Testis (tissue), 5 donors: ENCODE measurements at regions of chr15 and their contacts with region 1.

Region 1: DNA sequence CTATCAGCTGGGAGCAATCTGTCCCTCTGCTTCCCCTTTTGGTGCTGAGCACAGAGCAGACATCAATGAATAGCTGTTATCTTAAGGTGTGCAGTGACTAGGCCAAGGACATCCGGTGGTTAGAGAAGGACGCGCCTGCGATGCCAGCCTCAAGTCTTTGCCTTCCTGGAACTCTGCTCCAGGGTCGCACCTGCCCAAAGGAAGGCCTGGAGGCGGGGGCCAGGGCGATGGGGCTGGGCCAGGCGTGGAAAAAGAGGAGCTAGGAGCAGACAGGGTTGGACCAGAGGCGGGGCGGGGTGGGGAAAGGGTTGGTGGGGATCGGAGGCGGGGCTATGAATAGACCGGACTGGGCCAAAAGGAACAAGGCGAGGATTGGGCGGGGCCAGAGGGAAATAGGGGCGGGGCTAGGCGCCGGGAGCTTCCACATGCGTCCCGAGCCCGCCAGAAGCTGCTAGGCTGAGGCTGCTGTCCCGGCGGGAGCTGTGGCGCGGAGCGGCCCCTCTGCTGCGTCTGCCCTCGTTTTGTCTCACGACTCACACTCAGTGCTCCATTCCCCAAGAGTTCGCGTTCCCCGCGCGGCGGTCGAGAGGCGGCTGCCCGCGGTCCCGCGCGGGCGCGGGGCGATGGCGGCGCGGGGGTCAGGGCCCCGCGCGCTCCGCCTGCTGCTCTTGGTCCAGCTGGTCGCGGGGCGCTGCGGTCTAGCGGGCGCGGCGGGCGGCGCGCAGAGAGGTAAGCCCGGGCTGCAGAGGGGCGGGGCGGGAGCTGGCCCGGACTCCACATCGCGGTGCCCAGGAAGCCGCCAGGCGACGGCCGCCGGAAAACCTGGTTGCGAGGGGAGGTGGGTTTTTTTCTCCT is at the start of gene CHRNA5:
- DNase-seq: peak; percentile 93
- H3K4me3 ChIP-seq: peak within 1 kb of the TSS; percentile 56 to 62
- H3K27ac ChIP-seq: peak within 1 kb of the TSS in 1 of 2 donors; percentile 31
- H3K4me1 ChIP-seq: peaks cover 9% of the 10 kb centered on the region
- H3K27me3 ChIP-seq: no peaks in the 10 kb centered on the region
- CTCF ChIP-seq: no peak
- POLR2A ChIP-seq: no peak
- total RNA-seq, gene CHRNA5: 3.5 to 4.4 TPM

Region 2: DNA sequence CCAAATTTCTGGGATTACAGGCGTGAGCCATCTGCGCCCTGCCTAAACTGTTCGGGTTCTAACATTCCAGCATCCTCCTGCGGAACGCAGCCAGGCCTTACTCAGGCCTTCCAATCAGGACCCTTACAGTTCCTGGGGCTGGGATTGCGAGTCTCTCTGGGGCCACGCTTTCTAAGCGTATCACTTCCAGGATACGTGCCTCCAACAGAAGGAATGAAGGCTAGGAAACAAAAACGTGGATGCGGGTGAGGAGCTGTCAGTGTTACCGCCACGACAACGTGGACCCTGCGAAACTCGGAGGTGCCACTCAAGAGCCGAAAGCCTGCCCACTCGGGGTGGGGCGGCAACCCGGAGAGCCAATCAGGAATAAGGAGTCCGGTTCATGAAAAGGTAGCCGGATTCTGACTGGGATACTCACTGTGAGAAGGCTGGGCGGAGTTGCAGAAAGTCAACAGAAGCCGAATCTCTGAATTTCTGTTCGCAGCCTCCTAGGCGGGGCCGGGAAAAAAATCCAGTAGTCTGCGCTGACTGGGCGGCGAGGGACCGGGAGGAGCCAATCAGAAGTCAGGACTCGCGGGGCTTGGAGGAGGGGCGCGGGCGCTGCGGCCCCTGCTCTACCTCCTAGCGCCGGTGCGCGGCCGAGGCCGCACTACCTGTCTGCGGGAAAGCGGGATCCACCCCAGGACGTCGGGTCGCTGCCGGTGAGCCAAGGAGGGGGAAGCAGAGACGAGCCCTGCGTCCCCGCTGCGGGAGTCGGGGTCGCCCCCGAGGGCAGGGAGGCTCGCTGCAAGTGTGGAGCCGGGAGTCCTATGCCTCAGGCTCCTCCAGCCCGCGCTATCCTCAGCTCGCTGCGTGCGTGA is 58.1 kb before region 1 on chr15 and contains the start of gene HYKK:
- intact Hi-C with region 1: loop called (anchors 10 kb)
- DNase-seq: peak; percentile 95
- H3K4me3 ChIP-seq: peak within 1 kb of the TSS; percentile 74 to 79
- H3K27ac ChIP-seq: peak within 1 kb of the TSS; percentile 31 to 43
- H3K4me1 ChIP-seq: no peaks in the 10 kb centered on the region
- H3K27me3 ChIP-seq: no peaks in the 10 kb centered on the region
- CTCF ChIP-seq: peak in 1 of 3 experiments; percentile 13
- POLR2A ChIP-seq: no peak
- total RNA-seq, gene HYKK: 5.9 to 8.8 TPM